A549 (cell line): ENCODE measurements at regions of chr2 and their contacts with region 1.

Region 1: GRCh38 chr2:219689676-219690628 is 62.5 kb downstream of the SLC4A3 start:
- DNase-seq: peak; percentile 57 to 58
- ATAC-seq: peak; percentile 61 to 85; a peak in 4 of 6 replicates
- H3K4me3 ChIP-seq: no peak overlapping the region
- H3K27ac ChIP-seq: no peak overlapping the region
- H3K4me1 ChIP-seq: no peaks in the 10 kb centered on the region
- CTCF ChIP-seq: peak; percentile 81
- EP300 ChIP-seq: no peak
- POLR2A ChIP-seq: no peak
- RAD21 ChIP-seq: peak; percentile 70 to 73

Region 2: GRCh38 chr2:219642465-219643080 is 47.4 kb before region 1 on chr2:
- CTCF ChIA-PET with region 1: interaction called, 12 read pairs
- POLR2A ChIA-PET with region 1: no interaction called
- DNase-seq: peak; percentile 85 to 94
- ATAC-seq: peak; percentile 82 to 95
- H3K4me3 ChIP-seq: no peak overlapping the region
- H3K27ac ChIP-seq: no peak overlapping the region
- H3K4me1 ChIP-seq: peaks cover 10% of the 10 kb centered on the region; the same call in 2 of the 3 replicates
- CTCF ChIP-seq: peak; percentile 97
- EP300 ChIP-seq: no peak
- POLR2A ChIP-seq: no peak
- RAD21 ChIP-seq: peak; percentile 90

Region 3: GRCh38 chr2:219664944-219665343 is 25.0 kb before region 1 on chr2:
- CTCF ChIA-PET with region 1: interaction called, 12 read pairs
- POLR2A ChIA-PET with region 1: no interaction called
- DNase-seq: no peak
- ATAC-seq: no peak
- H3K4me3 ChIP-seq: no peak overlapping the region
- H3K27ac ChIP-seq: no peak overlapping the region
- H3K4me1 ChIP-seq: no peaks in the 10 kb centered on the region
- CTCF ChIP-seq: no peak
- EP300 ChIP-seq: no peak
- POLR2A ChIP-seq: no peak
- RAD21 ChIP-seq: no peak

Region 4: GRCh38 chr2:219675221-219675620 is 14.7 kb before region 1 on chr2:
- CTCF ChIA-PET with region 1: interaction called, 22 read pairs
- POLR2A ChIA-PET with region 1: no interaction called
- DNase-seq: no peak
- ATAC-seq: no peak
- H3K4me3 ChIP-seq: no peak overlapping the region
- H3K27ac ChIP-seq: no peak overlapping the region
- H3K4me1 ChIP-seq: no peaks in the 10 kb centered on the region
- CTCF ChIP-seq: no peak
- EP300 ChIP-seq: no peak
- POLR2A ChIP-seq: no peak
- RAD21 ChIP-seq: no peak

Region 5: GRCh38 chr2:219701847-219702634 is 12.1 kb after region 1 on chr2:
- CTCF ChIA-PET with region 1: interaction called, 34 read pairs
- POLR2A ChIA-PET with region 1: no interaction called
- DNase-seq: no peak
- ATAC-seq: no peak
- H3K4me3 ChIP-seq: no peak overlapping the region
- H3K27ac ChIP-seq: no peak overlapping the region
- H3K4me1 ChIP-seq: no peaks in the 10 kb centered on the region
- CTCF ChIP-seq: no peak
- EP300 ChIP-seq: no peak
- POLR2A ChIP-seq: no peak
- RAD21 ChIP-seq: no peak

Region 6: GRCh38 chr2:219744600-219744999 is 54.6 kb after region 1 on chr2:
- CTCF ChIA-PET with region 1: no interaction called
- POLR2A ChIA-PET with region 1: no interaction called
- DNase-seq: no peak
- ATAC-seq: no peak
- H3K4me3 ChIP-seq: no peak overlapping the region
- H3K27ac ChIP-seq: no peak overlapping the region
- H3K4me1 ChIP-seq: no peaks in the 10 kb centered on the region
- CTCF ChIP-seq: no peak
- EP300 ChIP-seq: no peak
- POLR2A ChIP-seq: no peak
- RAD21 ChIP-seq: no peak

Region 7: DNA sequence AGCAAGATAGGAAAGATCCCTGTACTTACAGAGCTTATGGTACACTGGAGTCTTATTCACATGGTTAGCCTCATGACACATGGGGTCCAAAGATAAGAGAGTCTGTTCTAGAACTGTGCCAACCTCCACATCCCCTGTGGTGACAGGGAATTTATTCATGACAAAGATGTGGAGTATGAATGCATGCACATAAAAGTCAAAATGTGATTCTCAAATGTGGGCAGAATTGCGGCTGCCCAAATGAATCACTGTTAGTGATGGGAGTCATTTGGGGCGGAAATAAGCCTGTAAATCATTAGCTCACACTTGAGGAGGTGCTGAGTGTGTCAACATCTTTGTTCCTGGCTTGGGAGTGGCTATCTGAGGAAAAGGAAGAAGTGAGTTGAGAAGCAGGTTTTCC is 498.1 kb after region 1 on chr2:
- CTCF ChIA-PET with region 1: no interaction called
- POLR2A ChIA-PET with region 1: no interaction called
- DNase-seq: peak; percentile 16 to 79
- ATAC-seq: peak; percentile 88 to 93
- H3K4me3 ChIP-seq: no peak overlapping the region
- H3K27ac ChIP-seq: peak overlapping the region in 1 of 2 experiments; percentile 66; a peak in 4 of 6 replicates
- H3K4me1 ChIP-seq: peaks cover 17% of the 10 kb centered on the region
- CTCF ChIP-seq: no peak
- EP300 ChIP-seq: peak in 1 of 2 experiments; percentile 24; a peak in 1 of 5 replicates
- POLR2A ChIP-seq: no peak
- RAD21 ChIP-seq: 0 out of 5 replicates have a peak, but pooled peaks have one; percentile 6 to 24